Activated CD8-positive, alpha-beta T cell treated with anti-CD3 and anti-CD28 coated beads for 36 hours (primary cell): ENCODE measurements at regions of chr4 and their contacts with region 1.

Region 1: GRCh38 chr4:89226665-89227574 is 80.7 kb downstream of the GPRIN3 start:
- DNase-seq: peak; percentile 87
- ATAC-seq: peak; percentile 80
- H3K4me3 Mint-ChIP-seq: peak overlapping the region; percentile 44
- H3K27ac Mint-ChIP-seq: peak overlapping the region; percentile 39
- H3K4me1 Mint-ChIP-seq: peaks cover 16% of the 10 kb centered on the region
- H3K27me3 Mint-ChIP-seq: peaks cover 3% of the 10 kb centered on the region
- CTCF ChIP-seq: peak; percentile 63

Region 2: GRCh38 chr4:89216866-89217265 is 10.1 kb before region 1 on chr4:
- CTCF ChIA-PET with region 1: interaction called, 12 read pairs
- POLR2A ChIA-PET with region 1: no interaction called
- intact Hi-C with region 1: no loop called
- DNase-seq: no peak
- ATAC-seq: no peak
- H3K4me3 Mint-ChIP-seq: no peak overlapping the region
- H3K27ac Mint-ChIP-seq: no peak overlapping the region
- H3K4me1 Mint-ChIP-seq: peaks cover 2% of the 10 kb centered on the region
- H3K27me3 Mint-ChIP-seq: peaks cover 1% of the 10 kb centered on the region
- CTCF ChIP-seq: no peak

Region 3: GRCh38 chr4:89294573-89295269 is 67.8 kb after region 1 on chr4:
- CTCF ChIA-PET with region 1: interaction called, 11 read pairs
- POLR2A ChIA-PET with region 1: interaction called, 3 read pairs
- intact Hi-C with region 1: no loop called
- DNase-seq: no peak
- ATAC-seq: peak; percentile 65
- H3K4me3 Mint-ChIP-seq: peak overlapping the region; percentile 66
- H3K27ac Mint-ChIP-seq: peak overlapping the region; percentile 98
- H3K4me1 Mint-ChIP-seq: peaks cover 83% of the 10 kb centered on the region
- H3K27me3 Mint-ChIP-seq: no peaks in the 10 kb centered on the region
- CTCF ChIP-seq: no peak

Region 4: DNA sequence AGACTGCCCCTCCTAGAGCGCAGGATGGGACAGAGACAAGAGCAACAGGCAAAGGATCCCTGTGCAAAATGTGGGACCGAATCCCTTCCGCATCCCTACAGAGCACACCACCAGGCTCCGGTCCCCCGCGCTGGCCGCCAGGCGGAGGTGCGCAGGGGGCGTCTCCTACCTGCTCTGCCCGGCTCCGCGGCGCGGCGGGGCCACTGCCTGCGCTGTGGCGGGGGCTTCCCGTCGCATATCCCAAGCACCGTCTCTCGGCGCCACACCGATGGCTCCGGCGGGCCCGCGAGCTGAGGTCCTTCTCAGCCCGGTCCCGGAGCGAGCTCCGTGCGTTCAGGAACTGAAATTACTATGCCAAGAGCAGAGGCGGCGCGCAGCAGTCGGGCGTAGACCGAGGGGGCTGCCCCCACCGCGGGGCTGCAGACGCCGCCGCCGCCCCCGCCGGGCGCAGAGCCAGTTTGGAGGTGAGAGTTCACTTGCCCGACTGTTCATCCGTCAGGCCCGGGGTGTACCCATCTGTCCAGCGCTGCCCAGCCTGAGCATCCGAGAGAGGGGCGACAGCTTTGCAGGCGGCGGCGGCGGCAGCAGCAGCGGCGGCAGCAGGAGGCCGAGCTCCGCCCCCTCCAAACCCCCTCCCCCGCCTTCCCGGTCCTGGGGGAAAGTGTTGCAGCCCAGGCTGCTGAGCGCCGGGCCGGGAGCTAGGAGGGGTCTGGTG is 80.7 kb after region 1 on chr4 and contains the start of gene GPRIN3:
- CTCF ChIA-PET with region 1: interaction called, 16 read pairs
- POLR2A ChIA-PET with region 1: interaction called, 3 read pairs
- intact Hi-C with region 1: loop called (anchors 5 kb)
- DNase-seq: peak; percentile 78
- ATAC-seq: peak; percentile 73
- H3K4me3 Mint-ChIP-seq: peak within 1 kb of the TSS; percentile 87
- H3K27ac Mint-ChIP-seq: peak within 1 kb of the TSS; percentile 89
- H3K4me1 Mint-ChIP-seq: peaks cover 49% of the 10 kb centered on the region
- H3K27me3 Mint-ChIP-seq: no peaks in the 10 kb centered on the region
- CTCF ChIP-seq: no peak
- total RNA-seq, gene GPRIN3: 10.6 to 11.8 TPM

Region 5: DNA sequence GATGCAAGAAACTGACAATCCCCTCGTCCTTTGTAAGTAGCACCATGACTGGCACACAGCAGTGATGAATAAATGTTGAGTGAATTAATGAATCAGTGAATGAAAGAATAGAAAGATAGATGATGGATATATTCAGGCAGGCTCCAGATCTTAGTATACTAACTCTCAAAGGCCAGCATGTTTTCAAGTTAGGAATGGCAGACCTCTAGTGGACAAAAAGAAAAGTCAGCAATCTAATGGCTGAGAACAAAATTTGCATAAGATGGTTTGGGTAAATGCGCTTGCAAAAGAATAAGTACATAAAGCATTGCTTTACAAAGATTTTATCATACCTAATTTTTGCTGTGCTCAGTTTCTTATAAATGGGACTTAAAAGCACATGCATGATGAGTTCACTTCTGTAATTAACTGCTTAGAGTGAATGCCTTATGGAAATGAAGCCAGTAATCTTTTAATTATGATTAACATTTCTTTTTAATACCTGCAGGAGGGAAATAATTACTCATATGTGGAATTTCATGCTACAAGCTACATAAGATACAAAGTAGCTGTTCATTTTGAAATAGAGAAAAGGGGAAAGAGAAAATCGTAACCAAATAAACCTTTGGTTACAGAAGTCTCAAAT is 207.6 kb after region 1 on chr4:
- CTCF ChIA-PET with region 1: interaction called, 79 read pairs
- POLR2A ChIA-PET with region 1: no interaction called
- intact Hi-C with region 1: loop called (anchors 1 kb)
- DNase-seq: no peak
- ATAC-seq: peak; percentile 59
- H3K4me3 Mint-ChIP-seq: no peak overlapping the region
- H3K27ac Mint-ChIP-seq: no peak overlapping the region
- H3K4me1 Mint-ChIP-seq: peaks cover 10% of the 10 kb centered on the region
- H3K27me3 Mint-ChIP-seq: no peaks in the 10 kb centered on the region
- CTCF ChIP-seq: peak; percentile 66